CD8-positive, alpha-beta memory T cell (primary cell): ENCODE measurements at regions of chr6 and their contacts with region 1.

Region 1: GRCh38 chr6:136289579-136290409 is at the start of gene BCLAF1:
- DNase-seq: peak; percentile 99 to 100 (median 100)
- H3K4me3 ChIP-seq: peak within 1 kb of the TSS; percentile 97
- H3K4me3 Mint-ChIP-seq: peak within 1 kb of the TSS; percentile 94 to 98 (median 98)
- H3K27ac ChIP-seq: peak within 1 kb of the TSS; percentile 100
- H3K27ac Mint-ChIP-seq: peak within 1 kb of the TSS; percentile 99 to 100 (median 100)
- H3K4me1 ChIP-seq: peaks cover 58% of the 10 kb centered on the region
- H3K4me1 Mint-ChIP-seq: peaks cover 53 to 71% (median 58%) of the 10 kb centered on the region in 3 donors
- H3K27me3 ChIP-seq: no peaks in the 10 kb centered on the region
- H3K27me3 Mint-ChIP-seq: peaks cover 0 to 19% of the 10 kb centered on the region in 2 donors
- total RNA-seq, gene BCLAF1: 247 to 269 TPM

Region 2: GRCh38 chr6:135497412-135498269 is 792.2 kb before region 1 on chr6 and contains the start of gene AHI1:
- CTCF ChIA-PET with region 1: interaction called, 5 read pairs
- POLR2A ChIA-PET with region 1: interaction called, 41 read pairs
- DNase-seq: peak; percentile 80 to 94 (median 86)
- H3K4me3 ChIP-seq: peak within 1 kb of the TSS; percentile 86
- H3K4me3 Mint-ChIP-seq: peak within 1 kb of the TSS in 1 of 7 donors; percentile 57
- H3K27ac ChIP-seq: peak within 1 kb of the TSS; percentile 96
- H3K27ac Mint-ChIP-seq: peak within 1 kb of the TSS in 5 of 8 donors; percentile 4 to 94 (median 49)
- H3K4me1 ChIP-seq: peaks cover 16% of the 10 kb centered on the region
- H3K4me1 Mint-ChIP-seq: peaks cover 4 to 15% (median 8%) of the 10 kb centered on the region in 3 donors
- H3K27me3 ChIP-seq: no peaks in the 10 kb centered on the region
- H3K27me3 Mint-ChIP-seq: peaks cover 0 to 2% of the 10 kb centered on the region in 2 donors
- total RNA-seq, gene AHI1: 41.1 to 41.2 TPM

Region 3: DNA sequence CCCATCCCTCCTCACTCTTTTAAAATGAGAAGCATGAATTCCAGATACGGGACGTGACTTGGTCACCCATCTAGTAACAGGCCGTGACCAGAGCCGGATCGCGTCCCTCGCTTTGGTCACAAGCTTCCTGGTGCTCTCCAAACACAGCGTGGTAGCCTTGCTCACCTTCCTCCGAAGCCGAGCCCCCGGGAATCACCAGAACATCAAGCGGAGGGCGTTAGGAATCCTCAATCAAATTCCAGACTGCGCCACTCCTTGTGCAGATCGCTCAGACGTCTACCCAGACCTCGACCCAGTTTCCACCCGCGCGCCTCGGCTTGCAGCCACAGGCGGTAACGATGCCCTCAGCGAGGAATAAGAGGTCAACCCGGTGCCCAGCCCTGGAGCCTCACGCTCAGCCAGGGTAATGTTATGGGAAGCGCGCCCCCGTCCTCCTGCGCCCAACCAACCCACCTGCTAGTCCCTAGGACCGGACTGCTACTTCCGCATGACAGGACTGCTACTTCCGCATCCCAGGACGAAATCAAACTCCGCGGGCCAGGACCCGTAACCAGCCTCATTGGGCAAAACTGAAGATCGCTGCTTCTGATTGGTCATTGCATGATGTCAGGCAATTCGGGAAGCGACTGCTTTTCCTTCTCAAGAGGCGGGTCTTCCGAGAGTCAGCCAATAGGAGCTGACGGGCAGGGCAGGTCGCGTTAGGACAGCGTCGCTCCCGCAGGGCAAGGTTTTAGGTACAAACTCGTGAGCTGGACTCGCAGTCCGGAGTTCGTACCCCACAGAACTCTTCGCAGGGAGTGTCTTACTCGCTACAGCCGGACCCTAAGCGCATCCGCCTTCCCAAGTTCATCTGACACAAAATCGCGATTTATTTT is 39.7 kb before region 1 on chr6 and contains the start of gene MTFR2:
- CTCF ChIA-PET with region 1: interaction called, 21 read pairs
- POLR2A ChIA-PET with region 1: interaction called, 74 read pairs
- DNase-seq: peak; percentile 88 to 97 (median 94)
- H3K4me3 ChIP-seq: peak within 1 kb of the TSS; percentile 82
- H3K4me3 Mint-ChIP-seq: peak within 1 kb of the TSS; percentile 93 to 97 (median 93)
- H3K27ac ChIP-seq: peak within 1 kb of the TSS; percentile 52
- H3K27ac Mint-ChIP-seq: peak within 1 kb of the TSS; percentile 27 to 91 (median 68)
- H3K4me1 ChIP-seq: peaks cover 19% of the 10 kb centered on the region
- H3K4me1 Mint-ChIP-seq: peaks cover 31 to 46% (median 40%) of the 10 kb centered on the region in 3 donors
- H3K27me3 ChIP-seq: no peaks in the 10 kb centered on the region
- H3K27me3 Mint-ChIP-seq: peaks cover 0 to 2% of the 10 kb centered on the region in 2 donors
- total RNA-seq, gene MTFR2: 18.8 to 21.7 TPM

Region 4: DNA sequence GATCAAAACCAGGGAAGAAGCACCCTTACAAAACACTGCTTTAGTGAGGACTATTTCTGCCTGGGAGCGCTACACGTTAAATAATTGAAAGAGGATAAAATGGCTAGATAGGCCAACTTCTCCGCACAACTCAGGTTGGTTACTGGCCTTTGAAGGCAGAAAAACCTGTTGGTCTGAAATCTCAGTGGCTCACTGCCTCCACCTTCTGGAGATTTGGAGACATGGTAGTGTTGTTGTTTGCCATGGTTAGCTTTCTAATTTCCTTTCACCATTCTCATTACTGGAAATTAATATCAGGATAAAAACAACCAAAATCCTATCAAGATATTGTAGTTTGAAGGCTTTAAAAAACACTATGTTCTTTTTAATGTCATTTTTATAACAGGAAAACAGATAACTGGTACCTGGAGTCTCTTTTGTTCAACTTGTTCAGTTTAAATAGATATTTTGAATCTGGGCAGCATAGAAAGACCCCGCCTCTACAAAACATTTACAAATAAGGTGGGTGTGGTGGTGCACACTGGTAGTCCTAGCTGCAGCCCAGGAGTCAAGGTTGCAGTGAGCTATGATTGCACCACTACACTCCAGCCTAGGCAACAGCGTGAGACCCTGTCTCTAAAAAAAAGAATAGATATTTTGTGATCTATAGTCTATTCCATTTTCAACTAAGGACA is 27.4 kb after region 1 on chr6:
- CTCF ChIA-PET with region 1: interaction called, 14 read pairs
- POLR2A ChIA-PET with region 1: interaction called, 5 read pairs
- DNase-seq: peak; percentile 24 to 76 (median 59)
- H3K4me3 ChIP-seq: no peak overlapping the region
- H3K4me3 Mint-ChIP-seq: no peak overlapping the region
- H3K27ac ChIP-seq: no peak overlapping the region
- H3K27ac Mint-ChIP-seq: no peak overlapping the region
- H3K4me1 ChIP-seq: no peaks in the 10 kb centered on the region
- H3K4me1 Mint-ChIP-seq: no peaks in the 10 kb centered on the region
- H3K27me3 ChIP-seq: peaks cover 4% of the 10 kb centered on the region
- H3K27me3 Mint-ChIP-seq: peaks cover 5 to 7% of the 10 kb centered on the region in 2 donors